Activated B cell treated with CpG ODN at 0.5 μM for 24 hours (primary cell): ENCODE measurements at regions of chr22 and their contacts with region 1.

Region 1: GRCh38 chr22:23913661-23914353 is 19.6 kb downstream of the MIF start:
- DNase-seq: peak; percentile 97
- ATAC-seq: peak; percentile 99
- H3K4me3 Mint-ChIP-seq: peak overlapping the region; percentile 96
- H3K27ac Mint-ChIP-seq: peak overlapping the region; percentile 96
- H3K4me1 Mint-ChIP-seq: peaks cover 29% of the 10 kb centered on the region
- H3K27me3 Mint-ChIP-seq: no peaks in the 10 kb centered on the region
- CTCF ChIP-seq: no peak

Region 2: DNA sequence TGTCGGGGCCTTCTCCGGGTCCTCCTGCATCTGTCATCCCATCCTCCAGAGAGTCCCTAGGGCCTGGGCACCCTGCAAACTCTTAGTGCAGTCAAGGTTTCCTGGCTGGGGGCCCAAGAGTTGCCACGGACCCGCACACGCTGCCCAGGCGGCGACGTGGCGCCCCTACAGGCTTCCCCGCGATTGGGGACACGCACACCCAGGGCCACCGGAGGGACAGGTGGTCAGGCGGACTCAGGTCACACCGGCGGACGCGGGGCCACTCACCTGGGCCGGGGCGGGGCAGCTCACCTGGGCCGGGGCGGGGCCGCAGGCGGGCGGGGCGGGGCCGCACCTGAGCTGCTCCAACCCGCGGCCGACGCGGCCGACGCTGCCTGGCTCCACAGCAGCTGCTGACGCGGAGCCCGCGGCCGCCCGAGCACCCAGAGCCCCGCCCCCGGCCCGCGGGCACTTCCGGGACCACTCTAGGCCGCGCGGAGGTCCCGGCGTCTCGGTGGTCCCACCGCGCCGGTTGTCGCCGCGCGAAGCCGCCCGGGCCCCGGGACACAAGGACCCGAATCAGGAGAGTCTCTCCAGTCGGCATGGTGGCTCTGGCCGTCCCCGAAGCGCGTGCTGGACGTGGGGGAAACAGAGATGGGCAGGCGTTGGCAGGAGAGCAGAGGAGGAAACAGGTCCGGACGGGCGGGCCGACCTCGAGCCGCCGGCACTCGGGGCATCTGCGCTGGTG is 162.9 kb before region 1 on chr22 and contains the start of gene ZNF70:
- CTCF ChIA-PET with region 1: no interaction called
- POLR2A ChIA-PET with region 1: no interaction called
- intact Hi-C with region 1: loop called (anchors 1 kb)
- DNase-seq: peak; percentile 90
- ATAC-seq: peak; percentile 58
- H3K4me3 Mint-ChIP-seq: peak within 1 kb of the TSS; percentile 87
- H3K27ac Mint-ChIP-seq: peak within 1 kb of the TSS; percentile 95
- H3K4me1 Mint-ChIP-seq: peaks cover 62% of the 10 kb centered on the region
- H3K27me3 Mint-ChIP-seq: no peaks in the 10 kb centered on the region
- CTCF ChIP-seq: no peak
- total RNA-seq, gene ZNF70: 4.0 and 4.9 TPM in 2 replicates

Region 3: GRCh38 chr22:23826465-23827199 is 87.2 kb before region 1 on chr22:
- CTCF ChIA-PET with region 1: no interaction called
- POLR2A ChIA-PET with region 1: no interaction called
- intact Hi-C with region 1: no loop called
- DNase-seq: no peak
- ATAC-seq: no peak
- H3K4me3 Mint-ChIP-seq: no peak overlapping the region
- H3K27ac Mint-ChIP-seq: no peak overlapping the region
- H3K4me1 Mint-ChIP-seq: peaks cover 44% of the 10 kb centered on the region
- H3K27me3 Mint-ChIP-seq: no peaks in the 10 kb centered on the region
- CTCF ChIP-seq: no peak

Region 4: DNA sequence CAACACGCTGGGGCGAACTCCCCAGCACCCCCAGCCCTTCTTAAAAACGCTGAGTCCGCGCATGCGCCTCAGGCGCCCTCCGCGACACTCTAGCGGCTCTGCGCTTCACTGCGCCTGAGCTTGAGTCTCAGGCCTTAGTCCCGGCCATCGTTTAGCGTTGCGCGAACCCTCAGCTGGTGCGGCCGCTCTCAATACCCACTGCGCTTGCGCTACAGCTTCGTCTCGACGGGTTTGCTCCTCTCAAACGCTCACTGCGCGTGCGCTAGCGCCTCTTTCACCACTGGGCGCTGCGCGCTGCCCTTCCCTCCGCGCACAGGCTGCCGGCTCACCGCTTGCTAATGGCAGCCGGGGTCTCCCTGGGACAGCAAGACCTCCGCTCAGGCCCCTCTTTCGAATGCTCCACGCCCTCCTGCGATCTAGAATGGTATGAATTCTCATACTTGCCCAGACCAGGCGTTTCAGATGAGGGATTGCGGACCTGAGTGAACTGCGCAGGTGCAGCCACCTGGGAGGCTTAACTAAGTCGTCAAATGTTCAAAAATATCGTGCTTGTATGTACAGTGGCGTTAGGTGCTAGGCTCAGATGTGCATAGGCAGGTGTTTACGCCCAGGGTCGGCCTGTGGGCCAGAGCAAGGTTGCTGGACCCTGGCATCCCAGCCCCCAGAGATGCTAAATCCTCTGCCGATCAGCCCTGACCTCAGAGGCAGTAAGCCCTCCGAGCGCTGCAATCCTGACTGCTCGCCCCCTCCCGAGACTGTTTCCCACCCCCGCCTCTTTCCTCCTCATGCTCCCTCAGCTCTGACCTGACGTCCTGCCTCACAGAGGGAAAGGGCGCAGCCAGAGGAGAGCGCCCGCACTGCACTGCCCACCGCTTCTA is 56.0 kb before region 1 on chr22 and contains the start of gene SLC2A11:
- CTCF ChIA-PET with region 1: no interaction called
- POLR2A ChIA-PET with region 1: interaction called, 25 read pairs
- intact Hi-C with region 1: loop called (anchors 5 kb)
- DNase-seq: peak; percentile 90
- ATAC-seq: peak; percentile 94
- H3K4me3 Mint-ChIP-seq: peak within 1 kb of the TSS; percentile 91
- H3K27ac Mint-ChIP-seq: peak within 1 kb of the TSS; percentile 94
- H3K4me1 Mint-ChIP-seq: peaks cover 22% of the 10 kb centered on the region
- H3K27me3 Mint-ChIP-seq: no peaks in the 10 kb centered on the region
- CTCF ChIP-seq: no peak
- total RNA-seq, gene SLC2A11: 24.0 and 30.2 TPM in 2 replicates

Region 5: GRCh38 chr22:23970816-23971486 is 57.1 kb after region 1 on chr22:
- CTCF ChIA-PET with region 1: no interaction called
- POLR2A ChIA-PET with region 1: no interaction called
- intact Hi-C with region 1: loop called (anchors 10 kb)
- DNase-seq: no peak
- ATAC-seq: no peak
- H3K4me3 Mint-ChIP-seq: no peak overlapping the region
- H3K27ac Mint-ChIP-seq: no peak overlapping the region
- H3K4me1 Mint-ChIP-seq: peaks cover 19% of the 10 kb centered on the region
- H3K27me3 Mint-ChIP-seq: no peaks in the 10 kb centered on the region
- CTCF ChIP-seq: no peak

Region 6: DNA sequence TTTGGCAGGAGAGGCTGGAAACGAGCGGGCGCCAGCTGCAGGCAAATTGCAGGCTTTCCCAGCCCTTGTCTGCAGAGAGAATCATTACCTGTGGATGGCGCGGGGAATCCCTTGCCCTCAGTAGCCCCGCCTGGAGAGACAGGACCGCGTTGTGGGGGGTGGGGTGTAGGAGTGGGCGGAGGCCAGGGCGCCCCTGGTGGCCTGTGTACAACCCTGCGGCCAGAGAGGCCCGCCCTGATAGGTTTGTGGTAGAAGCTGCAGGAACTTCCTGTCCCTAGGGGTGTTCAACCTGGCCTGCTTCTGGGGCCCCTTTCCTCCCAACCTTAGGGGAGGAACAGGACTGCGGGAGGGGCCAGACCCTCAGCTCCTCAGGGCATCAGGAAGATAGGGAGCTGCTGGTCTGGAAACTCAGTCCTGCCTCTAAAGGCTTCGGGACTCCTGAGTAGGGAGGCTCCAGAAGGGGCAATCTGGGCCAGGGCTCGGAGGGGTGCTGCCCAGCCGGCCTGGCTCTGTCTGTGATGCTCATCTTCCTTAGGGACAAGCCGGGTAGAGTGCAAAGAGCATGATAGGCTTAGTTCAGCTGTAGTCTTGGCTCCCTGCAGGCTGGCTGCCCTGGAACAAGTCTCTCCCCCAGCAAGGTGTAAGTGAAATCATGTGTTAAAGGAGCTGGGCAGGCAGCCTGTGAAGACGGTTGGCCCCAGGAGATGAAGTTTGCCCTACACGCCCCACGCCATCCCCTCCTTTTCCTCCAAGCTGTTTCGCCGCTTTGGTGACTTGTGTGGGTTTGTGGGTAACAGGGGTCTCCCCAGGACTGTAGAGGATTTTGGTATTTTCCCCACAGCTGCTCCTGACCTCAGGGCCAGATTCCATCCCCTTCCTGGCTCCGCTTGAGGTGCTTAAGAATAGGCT is 243.4 kb after region 1 on chr22:
- CTCF ChIA-PET with region 1: no interaction called
- POLR2A ChIA-PET with region 1: no interaction called
- intact Hi-C with region 1: loop called (anchors 1 kb)
- DNase-seq: peak; percentile 84
- ATAC-seq: peak; percentile 84
- H3K4me3 Mint-ChIP-seq: peak overlapping the region; percentile 91
- H3K27ac Mint-ChIP-seq: peak overlapping the region; percentile 85
- H3K4me1 Mint-ChIP-seq: peaks cover 64% of the 10 kb centered on the region
- H3K27me3 Mint-ChIP-seq: no peaks in the 10 kb centered on the region
- CTCF ChIP-seq: no peak

Region 7: DNA sequence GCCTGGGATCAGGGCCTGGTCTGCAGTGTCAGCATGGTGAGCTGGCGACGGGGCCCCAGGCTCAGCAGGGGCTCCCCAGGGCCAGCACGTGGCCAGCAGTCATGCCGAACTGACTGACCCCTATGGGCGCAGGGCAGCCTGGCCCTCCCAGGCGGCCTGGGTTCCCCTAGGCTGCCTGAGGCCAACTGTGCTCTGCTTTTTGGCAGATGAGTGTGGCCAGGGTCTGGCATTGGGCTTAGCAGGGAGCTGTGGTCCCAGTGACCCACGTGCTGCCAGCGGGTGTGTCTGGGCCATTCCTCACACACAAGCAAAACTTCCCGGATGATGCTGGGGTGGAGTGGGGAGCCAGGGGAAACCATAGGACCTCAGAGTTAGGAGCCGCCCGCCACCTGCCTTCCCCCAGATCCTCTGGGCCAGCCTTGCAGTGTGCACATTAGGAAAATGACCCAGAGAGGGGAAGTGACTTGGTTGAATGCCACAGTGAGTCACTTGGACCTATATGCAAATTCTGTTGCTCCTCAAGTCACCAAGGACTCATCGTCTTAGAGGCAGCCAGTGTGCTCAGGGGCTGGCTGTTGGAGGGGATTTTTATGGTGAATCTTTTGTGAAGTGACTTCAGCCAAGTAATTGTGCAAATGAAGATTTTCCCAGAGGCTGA is 520.1 kb after region 1 on chr22:
- CTCF ChIA-PET with region 1: no interaction called
- POLR2A ChIA-PET with region 1: no interaction called
- intact Hi-C with region 1: loop called (anchors 10 kb)
- DNase-seq: peak; percentile 57
- ATAC-seq: peak; percentile 69
- H3K4me3 Mint-ChIP-seq: peak overlapping the region; percentile 78
- H3K27ac Mint-ChIP-seq: peak overlapping the region; percentile 99
- H3K4me1 Mint-ChIP-seq: peaks cover 98% of the 10 kb centered on the region
- H3K27me3 Mint-ChIP-seq: no peaks in the 10 kb centered on the region
- CTCF ChIP-seq: no peak